Cardiac septum (tissue), 1 donor: ENCODE measurements at regions of chr9 and their contacts with region 1.

Region 1: DNA sequence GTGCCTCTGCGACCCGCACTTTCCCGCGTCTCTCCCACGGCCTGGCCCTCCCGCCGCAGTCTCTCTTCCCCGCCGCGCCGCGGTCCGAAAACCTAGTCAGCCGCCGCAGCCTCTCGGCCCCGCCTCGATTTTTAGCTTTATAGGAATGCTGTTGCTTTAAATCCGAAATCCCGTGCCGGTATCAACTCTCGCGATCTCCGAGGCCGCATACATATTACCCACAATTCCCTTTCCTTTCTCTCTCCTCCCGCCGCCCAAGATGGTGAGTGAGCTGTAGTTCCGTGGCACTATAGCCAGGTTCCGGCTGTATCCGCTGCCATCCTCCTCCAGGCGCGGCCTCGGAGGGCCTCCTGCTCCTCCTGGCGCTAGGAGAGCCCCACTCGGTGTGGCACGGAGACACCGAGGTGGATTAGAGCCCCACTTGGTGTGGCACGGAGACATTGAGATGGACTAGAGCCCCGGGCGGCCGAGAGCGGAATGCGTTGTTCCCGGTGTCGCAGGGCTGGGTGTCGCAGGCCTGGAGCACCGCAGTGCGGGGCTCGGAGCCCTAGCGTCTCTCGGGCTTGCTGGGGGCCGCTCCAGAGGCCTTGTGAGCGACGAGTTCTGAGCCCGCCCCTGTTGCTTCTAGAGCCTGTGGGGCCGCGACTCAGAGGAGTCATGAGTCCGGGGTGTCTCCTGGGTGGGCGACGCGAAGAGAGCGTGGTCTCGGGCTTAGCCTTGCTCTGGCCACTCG is at the starts of genes MED22 and RPL7A:
- DNase-seq: peak; percentile 96
- total RNA-seq, gene MED22: 20.2 TPM
- total RNA-seq, gene RPL7A: 761 TPM

Region 2: DNA sequence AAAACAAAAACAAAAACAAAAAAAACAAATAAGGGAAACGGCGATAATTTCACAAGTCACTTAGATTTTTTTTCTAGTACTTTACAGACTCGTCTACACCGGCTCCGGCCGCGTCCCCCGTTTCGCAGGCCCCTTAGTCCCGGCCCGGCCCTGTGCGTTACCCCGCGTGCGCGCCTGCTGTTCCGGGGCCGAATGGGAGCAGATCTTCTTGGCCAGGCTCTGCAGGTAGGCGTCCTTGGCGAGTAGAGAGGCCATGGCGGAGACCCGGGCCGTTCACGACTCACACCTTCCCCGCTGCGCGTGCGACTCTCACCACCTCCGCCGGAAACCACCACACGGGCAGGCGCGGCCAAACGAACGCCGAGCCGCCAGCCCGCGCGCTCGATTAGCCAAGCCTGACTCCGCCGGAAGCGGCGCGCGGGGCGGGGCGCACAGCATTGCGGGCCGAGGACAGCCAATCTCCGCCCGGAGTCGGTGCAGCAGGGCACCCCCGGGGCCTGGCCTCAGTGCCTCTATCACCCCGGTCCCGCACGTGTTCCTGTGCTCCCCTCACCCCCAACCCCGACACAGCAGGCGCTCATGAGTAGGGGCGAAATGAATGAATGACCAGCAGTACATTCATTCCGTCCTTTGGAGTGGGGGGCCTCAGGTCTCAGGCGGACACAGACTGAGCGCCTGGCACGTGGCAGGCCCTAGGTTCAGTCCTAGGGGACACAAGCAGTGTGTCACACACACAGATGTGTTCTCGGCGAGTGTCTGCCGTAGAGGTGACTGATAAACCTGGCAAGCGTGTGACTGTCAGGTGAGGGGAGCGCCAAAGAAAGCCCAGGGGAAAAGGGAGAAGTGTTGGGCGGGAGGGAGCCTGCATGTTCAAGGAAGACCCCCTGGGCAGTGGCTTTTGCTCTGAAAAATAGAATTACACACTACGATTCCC is 12.0 kb before region 1 on chr9 and contains the start of gene SURF6:
- intact Hi-C with region 1: loop called (anchors 2 kb)
- DNase-seq: peak; percentile 95
- total RNA-seq, gene SURF6: 14.2 TPM

Region 3: GRCh38 chr9:133563001-133563796 is 215.0 kb after region 1 on chr9:
- intact Hi-C with region 1: no loop called
- DNase-seq: no peak